Endothelial cell of umbilical vein (primary cell): ENCODE measurements at regions of chr15 and their contacts with region 1.

Region 1: DNA sequence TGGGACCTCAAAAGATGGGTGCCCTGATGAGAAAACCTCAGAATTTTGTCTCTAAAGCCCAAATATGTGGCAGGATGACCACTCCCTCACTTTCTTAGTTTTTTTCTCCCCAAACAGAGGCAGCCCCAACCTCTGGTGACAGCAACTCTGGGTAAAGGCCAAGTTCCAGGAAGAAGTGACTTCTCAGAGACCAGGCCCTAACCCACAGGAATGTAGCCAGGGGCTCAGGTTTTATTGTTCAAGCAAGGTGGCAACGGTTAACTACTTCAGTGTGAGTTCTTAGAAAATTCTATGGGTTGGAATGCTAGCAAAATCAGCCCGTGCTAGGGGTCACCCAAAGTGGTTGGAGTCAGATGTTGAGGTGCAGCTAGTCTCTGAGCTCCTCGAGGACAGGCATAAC is 5.1 kb upstream of the DNAJA4 start:
- DNase-seq: no peak
- H3K4me3 ChIP-seq: no peak overlapping the region
- H3K27ac ChIP-seq: no peak overlapping the region
- H3K4me1 ChIP-seq: no peaks in the 10 kb centered on the region
- H3K27me3 ChIP-seq: peaks cover 0 to 3% of the 10 kb centered on the region in 2 experiments
- CTCF ChIP-seq: no peak
- POLR2A ChIP-seq: no peak

Region 2: GRCh38 chr15:78603467-78603866 is 344.2 kb after region 1 on chr15:
- CTCF ChIA-PET with region 1: no interaction called
- POLR2A ChIA-PET with region 1: interaction called, 10 read pairs
- dilution Hi-C with region 1: no loop called
- intact Hi-C with region 1: no loop called
- DNase-seq: no peak
- H3K4me3 ChIP-seq: no peak overlapping the region
- H3K27ac ChIP-seq: no peak overlapping the region
- H3K4me1 ChIP-seq: no peaks in the 10 kb centered on the region
- H3K27me3 ChIP-seq: no peaks in the 10 kb centered on the region
- CTCF ChIP-seq: no peak
- POLR2A ChIP-seq: no peak